GM12878 (cell line): ENCODE measurements at regions of chr14 and their contacts with region 1.

Region 1: DNA sequence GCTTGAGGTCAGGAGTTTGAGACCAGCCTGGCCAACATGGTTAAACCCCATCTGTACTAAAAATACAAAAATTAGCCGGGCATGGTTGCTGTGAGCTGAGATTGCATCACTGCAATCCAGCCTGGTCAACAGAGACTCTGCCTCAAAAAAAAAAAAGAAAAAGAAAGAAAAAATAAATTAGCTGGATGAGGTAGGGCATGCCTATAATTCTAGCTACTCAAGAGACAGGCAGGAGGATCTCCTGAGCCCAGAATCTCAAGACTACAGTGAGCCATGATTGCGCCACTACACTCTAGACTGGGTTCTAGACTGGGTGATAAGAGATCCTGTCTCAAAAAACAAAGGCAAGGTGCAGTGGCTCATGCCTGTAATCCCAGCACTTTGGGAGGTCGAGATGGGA is 16.9 kb downstream of the PPP4R3A start:
- DNase-seq: no peak
- ATAC-seq: no peak
- H3K4me3 ChIP-seq: no peak overlapping the region
- H3K27ac ChIP-seq: no peak overlapping the region
- H3K4me1 ChIP-seq: peaks cover 35% of the 10 kb centered on the region
- H3K27me3 ChIP-seq: no peaks in the 10 kb centered on the region
- CTCF ChIP-seq: no peak
- EP300 ChIP-seq: no peak
- POLR2A ChIP-seq: no peak
- RAD21 ChIP-seq: no peak

Region 2: DNA sequence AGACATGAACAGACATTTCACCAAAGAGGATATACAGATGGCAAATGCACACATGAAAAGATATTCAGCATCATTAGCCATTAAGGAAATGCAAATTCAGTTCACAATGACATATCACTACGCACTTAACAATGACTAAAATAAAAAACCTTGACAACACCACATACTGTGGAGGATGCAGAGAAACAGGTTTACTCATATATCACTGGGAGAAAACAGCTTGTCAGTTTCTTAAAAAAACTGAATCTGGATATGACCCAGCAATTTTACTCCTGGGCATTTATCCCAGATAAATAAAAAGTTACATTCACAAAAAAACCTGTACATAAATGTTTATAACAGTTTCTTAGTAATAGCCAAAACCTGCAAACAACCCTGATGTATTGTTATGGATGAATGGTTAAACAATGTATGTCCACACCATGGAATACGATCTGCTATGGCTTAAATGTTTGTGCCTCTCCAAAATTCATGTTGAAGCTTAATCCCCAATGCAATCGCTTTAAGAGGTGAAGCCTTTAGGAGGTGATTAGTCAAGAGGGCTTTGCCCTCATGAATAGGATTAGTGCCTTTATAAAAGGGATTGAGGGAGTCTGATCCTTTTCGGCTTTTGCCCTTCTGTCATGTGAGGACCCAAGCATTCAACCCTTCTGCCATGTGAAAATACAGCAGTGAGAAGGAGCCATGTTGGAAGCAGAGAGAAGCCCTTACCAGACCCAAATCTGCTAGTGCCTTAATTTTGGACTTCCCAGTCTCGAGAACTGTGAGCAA is 53.0 kb after region 1 on chr14:
- CTCF ChIA-PET with region 1: no interaction called
- POLR2A ChIA-PET with region 1: no interaction called
- RAD21 ChIA-PET with region 1: no interaction called
- SMC1A ChIA-PET with region 1: no interaction called
- in situ Hi-C with region 1: no loop called
- intact Hi-C with region 1: no loop called
- DNase-seq: no peak
- ATAC-seq: no peak
- H3K4me3 ChIP-seq: no peak overlapping the region
- H3K27ac ChIP-seq: no peak overlapping the region
- H3K4me1 ChIP-seq: no peaks in the 10 kb centered on the region
- H3K27me3 ChIP-seq: no peaks in the 10 kb centered on the region
- CTCF ChIP-seq: no peak
- EP300 ChIP-seq: no peak
- POLR2A ChIP-seq: no peak
- RAD21 ChIP-seq: no peak

Region 3: DNA sequence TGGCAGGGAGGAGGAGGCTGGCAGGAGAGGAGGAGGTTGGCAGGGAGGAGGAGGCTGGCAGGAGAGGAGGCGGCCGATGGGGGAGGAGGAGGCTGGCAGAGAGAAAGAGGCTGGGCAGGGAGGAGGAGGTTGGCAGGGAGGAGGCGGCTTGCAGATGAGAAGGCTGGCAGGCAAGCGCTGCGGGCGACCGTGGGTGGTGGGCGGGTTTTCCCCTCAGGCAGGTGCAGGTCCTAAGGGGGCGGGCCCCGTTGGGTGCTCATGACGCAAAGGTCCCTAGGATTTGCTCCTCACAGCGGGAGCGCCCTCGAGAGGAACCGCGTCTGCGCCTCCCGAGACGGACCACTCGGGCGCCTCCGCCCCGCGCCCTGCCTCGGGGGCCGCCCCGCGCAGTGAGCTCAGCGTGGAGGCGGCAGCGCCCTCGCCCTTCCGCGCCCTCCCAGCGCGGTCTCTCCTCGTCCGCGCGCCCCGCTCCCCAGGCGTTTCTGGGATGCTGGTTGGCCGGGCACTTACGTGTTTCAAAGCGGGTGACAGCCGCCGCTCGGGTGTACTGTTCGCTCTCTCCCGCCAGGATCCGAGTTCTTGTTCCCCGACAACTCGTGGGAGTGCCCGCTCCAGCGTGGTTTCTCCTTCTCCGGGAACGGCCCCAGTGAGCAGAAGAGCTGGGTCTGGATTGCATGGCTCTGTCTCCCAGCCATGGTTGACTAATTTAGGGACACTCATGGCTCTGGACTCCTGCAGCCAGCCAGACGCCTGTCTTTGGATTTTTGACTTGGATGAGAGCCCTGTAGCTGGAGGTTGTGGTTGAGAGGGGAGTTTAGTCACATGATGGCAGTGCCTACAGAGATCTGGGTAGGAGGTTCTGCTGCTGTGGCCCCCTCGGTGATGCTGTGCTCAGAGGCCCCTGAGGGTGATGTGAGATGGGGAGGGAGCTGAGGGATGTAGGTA is 81.0 kb after region 1 on chr14:
- CTCF ChIA-PET with region 1: no interaction called
- POLR2A ChIA-PET with region 1: no interaction called
- RAD21 ChIA-PET with region 1: no interaction called
- SMC1A ChIA-PET with region 1: no interaction called
- in situ Hi-C with region 1: no loop called
- intact Hi-C with region 1: no loop called
- DNase-seq: peak; percentile 2
- ATAC-seq: peak; percentile 73
- H3K4me3 ChIP-seq: no peak overlapping the region
- H3K27ac ChIP-seq: no peak overlapping the region
- H3K4me1 ChIP-seq: no peaks in the 10 kb centered on the region
- H3K27me3 ChIP-seq: peaks cover 7 to 13% of the 10 kb centered on the region in 2 experiments
- CTCF ChIP-seq: no peak
- EP300 ChIP-seq: no peak
- POLR2A ChIP-seq: no peak
- RAD21 ChIP-seq: no peak

Region 4: GRCh38 chr14:92039719-92040430 is 546.7 kb after region 1 on chr14 and contains the start of gene TRIP11:
- CTCF ChIA-PET with region 1: no interaction called
- POLR2A ChIA-PET with region 1: interaction called, 12 read pairs
- RAD21 ChIA-PET with region 1: no interaction called
- SMC1A ChIA-PET with region 1: no interaction called
- in situ Hi-C with region 1: no loop called
- intact Hi-C with region 1: no loop called
- DNase-seq: peak; percentile 72
- ATAC-seq: peak; percentile 98
- H3K4me3 ChIP-seq: peak within 1 kb of the TSS; percentile 82
- H3K27ac ChIP-seq: peak within 1 kb of the TSS; percentile 99
- H3K4me1 ChIP-seq: no peaks in the 10 kb centered on the region
- H3K27me3 ChIP-seq: no peaks in the 10 kb centered on the region
- CTCF ChIP-seq: no peak
- EP300 ChIP-seq: no peak
- POLR2A ChIP-seq: peak; percentile 99
- RAD21 ChIP-seq: no peak
- polyA plus RNA-seq, gene TRIP11: 7.1 to 32.0 TPM